ENCODE measurements at regions of chr10 and their contacts with region 1.

Region 1: GRCh38 chr10:70272925-70273316 is 10.9 kb downstream of the NPFFR1 start:
- DNase-seq: peak; percentile 35
- H3K4me3 Mint-ChIP-seq: no peak overlapping the region
- H3K27ac Mint-ChIP-seq: peak overlapping the region; percentile 56
- H3K4me1 Mint-ChIP-seq: peaks cover 22% of the 10 kb centered on the region
- H3K27me3 Mint-ChIP-seq: no peaks in the 10 kb centered on the region

Region 2: DNA sequence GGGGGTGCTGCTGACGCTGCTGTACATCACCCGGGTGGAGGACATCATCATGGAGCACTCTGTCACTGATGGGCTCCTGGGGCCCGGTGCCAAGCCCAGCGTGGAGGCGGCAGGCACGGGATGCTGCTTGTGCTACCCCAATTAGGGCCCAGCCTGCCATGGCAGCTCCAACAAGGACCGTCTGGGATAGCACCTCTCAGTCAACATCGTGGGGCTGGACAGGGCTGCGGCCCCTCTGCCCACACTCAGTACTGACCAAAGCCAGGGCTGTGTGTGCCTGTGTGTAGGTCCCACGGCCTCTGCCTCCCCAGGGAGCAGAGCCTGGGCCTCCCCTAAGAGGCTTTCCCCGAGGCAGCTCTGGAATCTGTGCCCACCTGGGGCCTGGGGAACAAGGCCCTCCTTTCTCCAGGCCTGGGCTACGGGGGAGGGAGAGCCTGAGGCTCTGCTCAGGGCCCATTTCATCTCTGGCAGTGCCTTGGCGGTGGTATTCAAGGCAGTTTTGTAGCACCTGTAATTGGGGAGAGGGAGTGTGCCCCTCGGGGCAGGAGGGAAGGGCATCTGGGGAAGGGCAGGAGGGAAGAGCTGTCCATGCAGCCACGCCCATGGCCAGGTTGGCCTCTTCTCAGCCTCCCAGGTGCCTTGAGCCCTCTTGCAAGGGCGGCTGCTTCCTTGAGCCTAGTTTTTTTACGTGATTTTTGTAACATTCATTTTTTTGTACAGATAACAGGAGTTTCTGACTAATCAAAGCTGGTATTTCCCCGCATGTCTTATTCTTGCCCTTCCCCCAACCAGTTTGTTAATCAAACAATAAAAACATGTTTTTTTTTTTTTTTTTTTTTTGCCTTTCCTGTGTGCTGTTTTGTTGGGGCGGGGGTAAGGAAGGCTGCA is 765.8 kb before region 1 on chr10:
- CTCF ChIA-PET with region 1: no interaction called
- intact Hi-C with region 1: no loop called
- DNase-seq: no peak
- H3K4me3 Mint-ChIP-seq: peak overlapping the region; percentile 66
- H3K27ac Mint-ChIP-seq: peak overlapping the region; percentile 34
- H3K4me1 Mint-ChIP-seq: peaks cover 10% of the 10 kb centered on the region
- H3K27me3 Mint-ChIP-seq: no peaks in the 10 kb centered on the region

Region 3: DNA sequence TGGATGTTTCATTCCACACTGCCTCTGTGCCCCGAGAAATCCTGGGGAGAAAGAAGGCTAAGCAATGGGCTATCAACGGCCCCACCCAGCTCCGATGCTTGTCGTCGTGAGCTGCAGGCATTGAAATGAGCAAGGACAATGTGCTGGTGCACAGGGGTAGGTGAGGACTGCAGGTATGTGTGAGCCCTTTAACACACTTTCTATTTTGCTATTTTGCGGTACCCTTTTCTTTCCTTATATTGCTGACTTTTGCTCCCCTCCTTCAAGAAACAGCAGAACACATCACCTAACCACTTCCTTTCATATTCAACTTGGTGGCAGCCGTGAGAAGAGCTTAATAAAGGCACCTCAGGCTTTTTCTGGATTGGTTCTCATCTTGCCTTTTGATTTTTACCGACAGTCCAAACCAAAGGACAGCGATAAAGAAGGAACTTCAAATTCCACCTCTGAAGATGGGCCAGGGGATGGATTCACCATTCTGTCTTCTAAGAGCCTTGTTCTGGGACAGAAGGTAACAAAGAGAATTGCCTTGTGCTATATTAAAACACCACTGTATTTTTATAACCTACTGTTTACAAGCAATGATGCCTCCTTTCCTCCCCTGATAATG is 179.5 kb before region 1 on chr10:
- CTCF ChIA-PET with region 1: interaction called, 3 read pairs
- intact Hi-C with region 1: loop called (anchors 5 kb)
- DNase-seq: peak; percentile 52
- H3K4me3 Mint-ChIP-seq: peak overlapping the region; percentile 74
- H3K27ac Mint-ChIP-seq: peak overlapping the region; percentile 73
- H3K4me1 Mint-ChIP-seq: peaks cover 32% of the 10 kb centered on the region
- H3K27me3 Mint-ChIP-seq: no peaks in the 10 kb centered on the region

Region 4: DNA sequence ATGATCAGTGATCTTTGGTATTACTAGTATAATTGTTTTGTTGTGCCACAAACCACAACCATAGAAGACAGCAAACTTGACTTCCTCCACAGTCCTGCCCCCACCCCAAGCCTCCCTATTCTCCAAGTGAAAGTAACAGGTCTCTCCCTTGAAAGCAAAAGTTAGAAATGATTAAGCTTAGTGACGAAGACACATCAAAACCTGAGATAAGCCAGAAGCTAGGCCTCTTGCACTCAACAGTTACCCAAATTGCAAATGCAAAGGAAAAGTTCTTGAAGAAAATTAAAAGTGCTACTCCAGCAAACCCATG is 110.1 kb before region 1 on chr10:
- CTCF ChIA-PET with region 1: no interaction called
- intact Hi-C with region 1: loop called (anchors 1 kb)
- DNase-seq: peak; percentile 87
- H3K4me3 Mint-ChIP-seq: peak overlapping the region; percentile 20
- H3K27ac Mint-ChIP-seq: peak overlapping the region; percentile 95
- H3K4me1 Mint-ChIP-seq: peaks cover 65% of the 10 kb centered on the region
- H3K27me3 Mint-ChIP-seq: no peaks in the 10 kb centered on the region

Region 5: GRCh38 chr10:70221030-70221429 is 51.9 kb before region 1 on chr10:
- CTCF ChIA-PET with region 1: interaction called, 14 read pairs
- intact Hi-C with region 1: loop called (anchors 2 kb)
- DNase-seq: no peak
- H3K4me3 Mint-ChIP-seq: no peak overlapping the region
- H3K27ac Mint-ChIP-seq: peak overlapping the region; percentile 82
- H3K4me1 Mint-ChIP-seq: peaks cover 34% of the 10 kb centered on the region
- H3K27me3 Mint-ChIP-seq: no peaks in the 10 kb centered on the region

Region 6: DNA sequence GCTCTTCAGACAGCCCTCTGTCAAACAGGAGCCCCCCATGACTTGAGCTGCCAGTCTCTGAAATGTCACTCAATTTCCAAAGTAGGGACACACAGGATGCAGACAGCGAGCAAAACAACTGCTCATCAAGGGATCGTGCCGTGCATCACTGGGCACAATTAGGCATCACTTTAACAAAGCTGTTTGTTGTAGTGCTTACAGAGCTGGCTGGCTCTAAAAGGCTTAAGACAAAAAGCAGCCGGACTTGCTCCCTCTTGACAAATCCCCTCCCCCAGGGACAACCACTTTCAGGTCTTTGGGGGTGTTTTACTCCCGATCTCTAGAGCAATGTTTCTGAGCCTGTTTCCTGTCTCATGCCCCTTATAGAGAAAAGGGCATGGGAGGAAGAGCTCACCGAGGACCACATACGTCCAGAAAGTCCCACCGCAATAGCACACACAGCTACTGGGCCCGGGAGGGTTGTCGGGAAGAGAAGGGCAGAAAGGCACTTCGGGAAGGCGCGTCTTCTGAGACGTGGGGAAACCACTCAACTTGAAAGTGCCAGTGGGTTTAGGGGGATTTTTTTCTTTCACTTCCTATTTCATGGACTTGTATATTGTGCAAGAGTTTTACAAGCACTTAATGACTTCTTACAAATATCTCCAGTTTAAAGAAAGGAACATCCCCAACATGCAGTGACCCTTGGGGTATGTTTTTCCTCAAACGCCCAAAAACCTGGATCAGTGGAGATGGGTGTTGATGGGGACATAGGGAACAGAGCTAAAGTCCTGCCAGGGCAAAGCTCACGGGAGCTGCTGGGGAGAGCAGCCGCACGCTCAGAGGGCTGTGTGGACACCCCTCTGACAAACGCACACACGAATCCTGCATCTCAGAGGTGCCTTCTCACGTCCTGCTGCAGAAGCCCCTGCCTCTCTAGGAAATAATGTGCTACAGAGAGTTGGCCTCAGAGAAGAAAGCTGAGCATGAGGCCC is 82.4 kb after region 1 on chr10:
- CTCF ChIA-PET with region 1: interaction called, 7 read pairs
- intact Hi-C with region 1: loop called (anchors 2 kb)
- DNase-seq: peak; percentile 52
- H3K4me3 Mint-ChIP-seq: peak overlapping the region; percentile 53
- H3K27ac Mint-ChIP-seq: peak overlapping the region; percentile 61
- H3K4me1 Mint-ChIP-seq: peaks cover 21% of the 10 kb centered on the region
- H3K27me3 Mint-ChIP-seq: no peaks in the 10 kb centered on the region

Region 7: DNA sequence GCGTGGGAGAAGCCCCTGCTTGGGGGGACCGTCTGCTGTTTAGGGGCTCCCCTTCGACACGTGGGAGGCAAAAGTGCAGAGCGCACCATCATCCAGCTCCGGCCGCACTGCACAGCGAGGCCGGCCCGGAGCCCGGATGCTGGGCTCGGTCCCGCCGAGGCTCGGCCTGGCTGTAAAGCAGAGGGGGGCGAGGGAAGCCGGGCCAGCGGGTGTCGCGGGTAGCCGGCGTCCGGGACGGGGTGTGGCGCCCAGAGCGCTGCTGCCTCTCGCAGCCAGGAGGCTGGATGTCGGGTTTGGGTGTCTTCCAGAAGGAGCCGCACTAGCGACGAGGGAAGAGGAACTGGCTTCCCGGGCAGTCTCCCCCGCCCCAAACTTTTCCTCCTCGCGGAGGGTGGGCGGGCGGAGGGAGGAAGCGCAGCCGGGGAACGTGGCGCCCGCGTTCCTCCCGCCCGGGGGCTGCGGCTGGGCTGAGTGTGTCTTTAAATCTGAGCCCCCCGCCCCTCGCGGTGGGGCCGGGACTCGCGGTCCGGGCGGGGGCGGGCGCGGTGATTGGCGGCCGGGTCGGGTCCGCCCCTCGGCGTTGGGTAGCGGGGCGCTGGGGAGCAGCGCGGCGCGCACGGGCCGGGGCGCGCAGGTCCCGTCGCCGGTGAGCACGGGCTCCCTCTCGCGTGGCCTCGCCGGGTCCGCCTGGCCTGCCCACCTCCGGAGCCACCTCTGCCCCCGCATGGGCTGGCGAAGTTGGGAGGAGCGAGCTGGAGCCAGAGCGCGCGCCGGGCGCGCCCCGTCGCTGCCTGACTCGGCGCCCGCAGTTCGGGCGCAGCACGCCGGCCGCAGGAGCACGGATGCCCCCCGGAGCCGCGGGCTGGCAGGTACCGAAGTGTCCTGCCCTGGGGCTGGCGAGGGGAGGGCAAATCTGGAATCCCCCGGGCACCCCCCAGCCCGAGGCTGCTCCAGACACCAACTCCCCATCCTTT is 205.6 kb after region 1 on chr10 and contains the start of gene PALD1:
- CTCF ChIA-PET with region 1: no interaction called
- intact Hi-C with region 1: loop called (anchors 5 kb)
- DNase-seq: peak; percentile 42
- H3K4me3 Mint-ChIP-seq: peak within 1 kb of the TSS; percentile 74
- H3K27ac Mint-ChIP-seq: peak within 1 kb of the TSS; percentile 41
- H3K4me1 Mint-ChIP-seq: peaks cover 43% of the 10 kb centered on the region
- H3K27me3 Mint-ChIP-seq: peaks cover 29% of the 10 kb centered on the region
- total RNA-seq, gene PALD1: 0.69 TPM

Region 8: GRCh38 chr10:70617798-70618568 is 345.1 kb after region 1 on chr10:
- CTCF ChIA-PET with region 1: no interaction called
- intact Hi-C with region 1: no loop called
- DNase-seq: peak; percentile 41
- H3K4me3 Mint-ChIP-seq: no peak overlapping the region
- H3K27ac Mint-ChIP-seq: no peak overlapping the region
- H3K4me1 Mint-ChIP-seq: peaks cover 12% of the 10 kb centered on the region
- H3K27me3 Mint-ChIP-seq: no peaks in the 10 kb centered on the region

Measured in activated naive CD4-positive, alpha-beta T cell treated with anti-CD3 and anti-CD28 coated beads for 36 hours (primary cell).